Activated T-helper 2 cell treated with anti-CD3 and anti-CD28 coated beads, Interferon-gamma antibody, Interleukin-2, Interleukin-4, amounts not matched to agents 10 μg/mL and 5 μg/mL and 100 μg/mL, durations not matched to agents 14 hours and 24 hours and 36 hours (primary cell): ENCODE measurements at regions of chr5 and their contacts with region 1.

Region 1: GRCh38 chr5:89313804-89314588 is 431.0 kb upstream of the MEF2C start:
- DNase-seq: no peak
- H3K4me3 Mint-ChIP-seq: no peak overlapping the region
- H3K27ac Mint-ChIP-seq: peak overlapping the region; percentile 84
- H3K4me1 Mint-ChIP-seq: peaks cover 24% of the 10 kb centered on the region
- H3K27me3 Mint-ChIP-seq: peaks cover 2% of the 10 kb centered on the region

Region 2: DNA sequence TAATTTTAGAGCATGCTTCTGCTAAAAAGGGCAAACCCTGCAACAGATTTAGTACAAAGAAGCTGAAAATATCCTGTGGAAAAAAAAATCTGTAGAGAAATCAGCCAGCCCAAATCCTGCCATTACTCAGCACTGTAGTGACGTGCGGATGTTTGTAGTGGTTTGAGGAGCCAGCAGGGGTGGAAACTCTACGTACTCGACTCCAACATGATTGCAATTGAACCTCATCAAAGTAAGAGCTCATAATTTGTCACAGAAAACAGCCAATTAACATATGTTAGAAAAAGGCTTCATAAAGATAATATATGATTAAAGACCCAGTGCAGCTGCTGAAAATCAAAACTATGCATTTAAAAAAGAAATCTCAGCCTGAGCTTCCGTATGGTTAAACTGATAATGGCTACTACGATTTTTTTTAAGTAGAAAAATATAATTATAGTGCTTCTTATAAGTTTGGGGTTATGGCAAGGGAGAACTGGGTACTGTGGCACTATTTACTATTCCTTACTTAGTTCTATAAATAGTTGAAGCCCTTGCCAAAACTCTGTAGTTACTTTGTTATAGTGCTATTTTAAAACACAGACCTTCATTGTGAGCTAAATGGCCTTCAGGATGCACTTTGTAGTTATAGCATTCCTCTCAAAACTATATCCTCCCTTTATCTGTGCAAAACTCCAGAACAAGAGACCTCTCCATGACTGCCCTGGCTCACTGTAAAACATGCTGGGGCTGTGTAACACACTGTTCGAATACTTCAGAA is 480.4 kb before region 1 on chr5:
- intact Hi-C with region 1: loop called (anchors 5 kb)
- DNase-seq: no peak
- H3K4me3 Mint-ChIP-seq: no peak overlapping the region
- H3K27ac Mint-ChIP-seq: no peak overlapping the region
- H3K4me1 Mint-ChIP-seq: peaks cover 17% of the 10 kb centered on the region
- H3K27me3 Mint-ChIP-seq: peaks cover 12% of the 10 kb centered on the region

Region 3: GRCh38 chr5:89005990-89006389 is 308.0 kb before region 1 on chr5:
- intact Hi-C with region 1: loop called (anchors 5 kb)
- DNase-seq: no peak
- H3K4me3 Mint-ChIP-seq: no peak overlapping the region
- H3K27ac Mint-ChIP-seq: no peak overlapping the region
- H3K4me1 Mint-ChIP-seq: peaks cover 19% of the 10 kb centered on the region
- H3K27me3 Mint-ChIP-seq: peaks cover 16% of the 10 kb centered on the region

Region 4: GRCh38 chr5:89241186-89241585 is 72.8 kb before region 1 on chr5:
- intact Hi-C with region 1: loop called (anchors 5 kb)
- DNase-seq: no peak
- H3K4me3 Mint-ChIP-seq: no peak overlapping the region
- H3K27ac Mint-ChIP-seq: no peak overlapping the region
- H3K4me1 Mint-ChIP-seq: no peaks in the 10 kb centered on the region
- H3K27me3 Mint-ChIP-seq: no peaks in the 10 kb centered on the region

Region 5: DNA sequence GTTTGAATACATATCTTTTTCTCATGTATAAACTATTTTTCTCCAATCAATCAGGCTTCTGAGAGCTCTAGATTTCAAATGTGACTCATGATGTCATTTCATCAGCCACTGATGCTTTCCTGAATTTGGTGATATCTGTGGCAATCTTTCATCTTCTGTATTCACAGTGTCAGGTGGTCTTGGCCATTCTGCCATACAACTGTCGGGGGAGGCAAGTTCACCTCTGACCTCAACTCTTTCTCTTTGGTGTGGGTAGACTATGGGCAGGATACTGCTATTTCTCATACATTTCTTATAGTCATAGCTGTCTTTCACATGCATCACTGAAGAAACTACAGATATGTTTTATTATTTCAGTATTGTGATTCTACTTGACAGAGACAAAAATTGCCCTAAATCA is 16.9 kb before region 1 on chr5:
- intact Hi-C with region 1: loop called (anchors 1 kb)
- DNase-seq: no peak
- H3K4me3 Mint-ChIP-seq: no peak overlapping the region
- H3K27ac Mint-ChIP-seq: no peak overlapping the region
- H3K4me1 Mint-ChIP-seq: peaks cover 9% of the 10 kb centered on the region
- H3K27me3 Mint-ChIP-seq: no peaks in the 10 kb centered on the region